CD4-positive, alpha-beta memory T cell (primary cell): ENCODE measurements at regions of chr6 and their contacts with region 1.

Region 1: GRCh38 chr6:130715058-130715457 is 112.1 kb upstream of the SMLR1 start:
- DNase-seq: no peak
- H3K4me3 ChIP-seq: no peak overlapping the region
- H3K4me3 Mint-ChIP-seq: no peak overlapping the region
- H3K27ac ChIP-seq: no peak overlapping the region
- H3K27ac Mint-ChIP-seq: no peak overlapping the region
- H3K4me1 ChIP-seq: peaks cover 15% of the 10 kb centered on the region
- H3K4me1 Mint-ChIP-seq: peaks cover 11 to 28% (median 20%) of the 10 kb centered on the region in 4 donors
- H3K27me3 ChIP-seq: no peaks in the 10 kb centered on the region
- H3K27me3 Mint-ChIP-seq: no peaks in the 10 kb centered on the region

Region 2: DNA sequence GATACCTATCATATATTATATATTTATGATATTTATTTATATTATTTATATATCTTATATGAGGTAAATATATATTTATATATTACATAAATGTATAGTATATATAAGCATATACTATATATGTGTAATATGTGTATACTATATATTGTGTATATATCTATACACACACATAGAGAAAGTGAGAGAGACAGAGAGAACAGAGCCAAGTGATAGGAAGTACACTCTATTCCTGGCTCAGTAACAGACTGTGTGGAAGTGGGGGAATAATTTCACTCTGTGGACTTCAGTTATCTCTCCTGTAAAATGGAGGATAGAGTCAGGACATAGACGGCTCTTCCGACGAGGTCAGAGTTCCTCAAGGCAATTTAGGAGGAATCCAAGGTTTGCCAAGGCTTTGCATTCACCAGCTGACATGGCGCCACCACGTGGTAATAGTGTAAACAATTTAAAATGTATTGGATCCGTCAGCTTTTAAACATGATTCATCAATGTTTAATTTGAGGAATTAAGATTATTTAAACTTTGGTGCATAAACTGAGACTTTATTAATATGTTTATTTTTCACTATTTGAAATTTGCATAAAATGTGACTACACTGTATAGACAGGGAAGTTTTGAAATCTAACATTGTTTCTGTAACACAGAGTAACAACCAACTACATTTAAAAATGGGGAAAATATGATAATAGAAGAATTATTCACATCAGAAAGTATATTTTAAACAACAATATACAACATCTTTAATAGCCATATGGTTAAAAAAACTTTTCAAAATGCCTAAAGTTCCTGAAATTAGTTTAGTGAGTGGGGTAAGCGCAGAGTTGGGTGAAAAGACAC is 778.5 kb before region 1 on chr6:
- CTCF ChIA-PET with region 1: no interaction called
- POLR2A ChIA-PET with region 1: no interaction called
- intact Hi-C with region 1: no loop called
- DNase-seq: peak in 4 of 5 donors; percentile 25 to 39 (median 34)
- H3K4me3 ChIP-seq: no peak overlapping the region
- H3K4me3 Mint-ChIP-seq: peak overlapping the region in 2 of 8 donors; percentile 38 to 79
- H3K27ac ChIP-seq: no peak overlapping the region
- H3K27ac Mint-ChIP-seq: no peak overlapping the region
- H3K4me1 ChIP-seq: no peaks in the 10 kb centered on the region
- H3K4me1 Mint-ChIP-seq: peaks cover 0 to 4% (median 1%) of the 10 kb centered on the region in 4 donors
- H3K27me3 ChIP-seq: peaks cover 4% of the 10 kb centered on the region
- H3K27me3 Mint-ChIP-seq: peaks cover 11 to 15% of the 10 kb centered on the region in 2 donors

Region 3: DNA sequence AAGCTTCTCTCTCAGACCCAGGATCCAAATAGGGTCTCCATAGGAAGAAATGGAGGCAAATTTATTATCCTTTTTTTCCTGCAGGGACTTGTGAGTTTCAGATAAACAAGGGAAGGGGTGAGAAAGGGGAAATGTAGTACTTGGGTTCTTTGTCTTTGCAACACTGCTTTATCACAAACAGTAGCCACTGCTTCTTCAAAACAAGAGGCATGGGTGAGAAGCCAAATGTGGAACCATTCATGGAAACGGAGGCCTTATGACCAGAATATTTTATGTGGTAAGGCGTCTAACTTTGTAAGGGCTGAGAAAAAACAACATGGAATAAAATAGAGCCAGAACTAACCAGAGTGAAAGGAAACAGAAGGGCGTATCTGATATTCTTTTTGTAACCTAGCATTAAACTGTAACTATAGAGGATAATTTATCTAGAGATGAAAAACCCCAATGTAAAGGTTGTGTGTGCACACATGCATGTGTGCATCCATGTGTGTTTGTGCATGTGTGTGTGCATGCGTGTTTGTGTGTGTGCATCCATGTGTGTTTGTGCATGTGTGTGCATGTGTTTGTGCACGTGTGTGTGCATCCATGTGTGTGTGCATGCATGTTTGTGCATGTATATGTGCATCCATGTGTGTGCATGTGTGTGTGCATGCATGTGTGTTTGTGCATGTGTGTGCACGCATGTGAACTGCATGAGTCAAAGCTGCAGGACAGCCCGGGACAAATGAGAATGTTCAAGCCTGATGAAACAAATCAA is 31.1 kb before region 1 on chr6:
- CTCF ChIA-PET with region 1: no interaction called
- POLR2A ChIA-PET with region 1: no interaction called
- intact Hi-C with region 1: loop called (anchors 1 kb)
- DNase-seq: no peak
- H3K4me3 ChIP-seq: no peak overlapping the region
- H3K4me3 Mint-ChIP-seq: no peak overlapping the region
- H3K27ac ChIP-seq: no peak overlapping the region
- H3K27ac Mint-ChIP-seq: no peak overlapping the region
- H3K4me1 ChIP-seq: no peaks in the 10 kb centered on the region
- H3K4me1 Mint-ChIP-seq: no peaks in the 10 kb centered on the region
- H3K27me3 ChIP-seq: no peaks in the 10 kb centered on the region
- H3K27me3 Mint-ChIP-seq: peaks cover 0 to 3% of the 10 kb centered on the region in 2 donors

Region 4: GRCh38 chr6:130776287-130776925 is 61.3 kb after region 1 on chr6:
- CTCF ChIA-PET with region 1: no interaction called
- POLR2A ChIA-PET with region 1: no interaction called
- intact Hi-C with region 1: no loop called
- DNase-seq: no peak
- H3K4me3 ChIP-seq: no peak overlapping the region
- H3K4me3 Mint-ChIP-seq: peak overlapping the region in 3 of 8 donors; percentile 2 to 78 (median 64)
- H3K27ac ChIP-seq: no peak overlapping the region
- H3K27ac Mint-ChIP-seq: peak overlapping the region in 1 of 7 donors; percentile 83
- H3K4me1 ChIP-seq: peaks cover 2% of the 10 kb centered on the region
- H3K4me1 Mint-ChIP-seq: peaks cover 5 to 30% (median 19%) of the 10 kb centered on the region in 4 donors
- H3K27me3 ChIP-seq: no peaks in the 10 kb centered on the region
- H3K27me3 Mint-ChIP-seq: peaks cover 0 to 2% of the 10 kb centered on the region in 2 donors